Activated CD4-positive, alpha-beta T cell treated with anti-CD3 and anti-CD28 coated beads for 36 hours (primary cell): ENCODE measurements at regions of chr15 and their contacts with region 1.

Region 1: DNA sequence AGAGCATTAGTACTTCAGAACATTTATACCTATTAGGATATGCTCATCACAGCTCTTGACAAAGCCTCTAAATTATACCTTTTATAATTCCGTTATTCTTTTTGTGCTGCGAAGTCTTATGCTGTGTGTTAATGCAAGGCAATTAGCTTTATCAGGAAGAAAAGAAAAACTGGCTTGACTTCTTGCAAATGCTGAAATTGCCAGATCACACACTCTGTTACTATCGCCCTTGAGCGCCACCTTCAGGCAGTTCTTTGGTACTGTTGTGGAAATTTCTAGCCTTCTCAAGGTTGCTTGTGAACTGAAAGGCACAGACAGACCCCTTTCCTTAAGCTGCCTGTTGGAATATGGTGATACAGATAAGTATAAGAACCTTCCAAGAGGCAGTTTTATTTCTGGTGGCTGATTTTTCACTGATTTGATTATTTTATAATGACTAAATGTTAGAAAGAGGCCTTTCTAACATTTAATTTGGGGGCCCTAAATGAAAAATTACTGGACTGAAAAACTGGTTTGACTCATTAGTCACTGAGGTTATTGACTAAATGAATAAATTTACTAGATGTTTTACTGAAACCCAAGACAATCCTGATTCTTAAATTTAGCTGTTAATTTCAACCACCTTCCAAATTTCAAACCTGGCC is 126.2 kb upstream of the RASGRP1 start:
- DNase-seq: peak; percentile 89
- ATAC-seq: peak; percentile 16
- H3K4me3 Mint-ChIP-seq: no peak overlapping the region
- H3K27ac Mint-ChIP-seq: peak overlapping the region; percentile 42
- H3K4me1 Mint-ChIP-seq: peaks cover 78% of the 10 kb centered on the region
- H3K27me3 Mint-ChIP-seq: no peaks in the 10 kb centered on the region

Region 2: GRCh38 chr15:38378161-38378560 is 312.6 kb before region 1 on chr15:
- CTCF ChIA-PET with region 1: no interaction called
- POLR2A ChIA-PET with region 1: no interaction called
- intact Hi-C with region 1: no loop called
- DNase-seq: no peak
- ATAC-seq: no peak
- H3K4me3 Mint-ChIP-seq: no peak overlapping the region
- H3K27ac Mint-ChIP-seq: no peak overlapping the region
- H3K4me1 Mint-ChIP-seq: no peaks in the 10 kb centered on the region
- H3K27me3 Mint-ChIP-seq: peaks cover 37% of the 10 kb centered on the region

Region 3: GRCh38 chr15:38453971-38454695 is 236.7 kb before region 1 on chr15 and contains the start of gene FAM98B:
- CTCF ChIA-PET with region 1: interaction called, 45 read pairs
- POLR2A ChIA-PET with region 1: interaction called, 4 read pairs
- intact Hi-C with region 1: no loop called
- DNase-seq: peak; percentile 92
- ATAC-seq: peak; percentile 92
- H3K4me3 Mint-ChIP-seq: peak within 1 kb of the TSS; percentile 78
- H3K27ac Mint-ChIP-seq: peak within 1 kb of the TSS; percentile 93
- H3K4me1 Mint-ChIP-seq: peaks cover 31% of the 10 kb centered on the region
- H3K27me3 Mint-ChIP-seq: no peaks in the 10 kb centered on the region
- total RNA-seq, gene FAM98B: 54.2 to 81.9 TPM

Region 4: DNA sequence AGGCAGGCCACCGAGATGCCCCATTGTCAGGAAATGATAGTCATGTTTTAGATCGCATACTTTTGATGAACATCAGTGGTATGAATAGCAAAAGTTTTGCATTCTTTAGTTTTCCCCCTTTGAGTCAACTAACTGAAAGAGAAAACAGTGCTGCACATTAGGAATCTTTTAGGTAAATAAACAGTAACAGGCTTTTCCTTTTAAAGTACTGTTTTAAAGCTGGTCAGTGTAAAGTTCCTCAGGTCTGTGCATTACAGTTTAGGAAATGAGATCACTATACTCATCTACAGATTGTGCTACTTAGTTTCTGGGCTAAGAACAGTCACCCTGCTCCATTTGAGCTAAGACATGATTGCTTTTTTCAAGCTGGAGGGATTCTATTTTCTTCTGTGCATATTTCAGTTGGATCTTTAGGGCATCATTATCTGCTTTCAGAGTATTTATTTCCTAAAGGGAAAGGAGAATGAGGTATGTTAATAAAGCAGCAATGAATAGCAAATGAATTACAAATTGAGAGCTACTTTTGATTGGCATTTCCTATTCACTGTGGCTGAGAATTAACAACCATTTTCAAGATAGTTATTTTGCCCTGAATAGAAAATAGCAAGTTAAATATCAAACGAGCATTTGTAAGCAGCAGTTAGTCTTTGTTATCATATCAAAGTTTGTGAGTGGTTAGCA is 200.4 kb before region 1 on chr15:
- CTCF ChIA-PET with region 1: interaction called, 27 read pairs
- POLR2A ChIA-PET with region 1: interaction called, 4 read pairs
- intact Hi-C with region 1: loop called (anchors 1 to 2 kb)
- DNase-seq: no peak
- ATAC-seq: no peak
- H3K4me3 Mint-ChIP-seq: no peak overlapping the region
- H3K27ac Mint-ChIP-seq: peak overlapping the region; percentile 71
- H3K4me1 Mint-ChIP-seq: peaks cover 54% of the 10 kb centered on the region
- H3K27me3 Mint-ChIP-seq: no peaks in the 10 kb centered on the region

Region 5: GRCh38 chr15:38514601-38515000 is 176.2 kb before region 1 on chr15:
- CTCF ChIA-PET with region 1: interaction called, 15 read pairs
- POLR2A ChIA-PET with region 1: interaction called, 3 read pairs
- intact Hi-C with region 1: no loop called
- DNase-seq: no peak
- ATAC-seq: no peak
- H3K4me3 Mint-ChIP-seq: no peak overlapping the region
- H3K27ac Mint-ChIP-seq: peak overlapping the region; percentile 42
- H3K4me1 Mint-ChIP-seq: peaks cover 38% of the 10 kb centered on the region
- H3K27me3 Mint-ChIP-seq: no peaks in the 10 kb centered on the region

Region 6: GRCh38 chr15:38554354-38554753 is 136.5 kb before region 1 on chr15:
- CTCF ChIA-PET with region 1: interaction called, 339 read pairs
- POLR2A ChIA-PET with region 1: interaction called, 3 read pairs
- intact Hi-C with region 1: no loop called
- DNase-seq: peak; percentile 73
- ATAC-seq: peak; percentile 74
- H3K4me3 Mint-ChIP-seq: no peak overlapping the region
- H3K27ac Mint-ChIP-seq: peak overlapping the region; percentile 91
- H3K4me1 Mint-ChIP-seq: peaks cover 89% of the 10 kb centered on the region
- H3K27me3 Mint-ChIP-seq: no peaks in the 10 kb centered on the region

Region 7: DNA sequence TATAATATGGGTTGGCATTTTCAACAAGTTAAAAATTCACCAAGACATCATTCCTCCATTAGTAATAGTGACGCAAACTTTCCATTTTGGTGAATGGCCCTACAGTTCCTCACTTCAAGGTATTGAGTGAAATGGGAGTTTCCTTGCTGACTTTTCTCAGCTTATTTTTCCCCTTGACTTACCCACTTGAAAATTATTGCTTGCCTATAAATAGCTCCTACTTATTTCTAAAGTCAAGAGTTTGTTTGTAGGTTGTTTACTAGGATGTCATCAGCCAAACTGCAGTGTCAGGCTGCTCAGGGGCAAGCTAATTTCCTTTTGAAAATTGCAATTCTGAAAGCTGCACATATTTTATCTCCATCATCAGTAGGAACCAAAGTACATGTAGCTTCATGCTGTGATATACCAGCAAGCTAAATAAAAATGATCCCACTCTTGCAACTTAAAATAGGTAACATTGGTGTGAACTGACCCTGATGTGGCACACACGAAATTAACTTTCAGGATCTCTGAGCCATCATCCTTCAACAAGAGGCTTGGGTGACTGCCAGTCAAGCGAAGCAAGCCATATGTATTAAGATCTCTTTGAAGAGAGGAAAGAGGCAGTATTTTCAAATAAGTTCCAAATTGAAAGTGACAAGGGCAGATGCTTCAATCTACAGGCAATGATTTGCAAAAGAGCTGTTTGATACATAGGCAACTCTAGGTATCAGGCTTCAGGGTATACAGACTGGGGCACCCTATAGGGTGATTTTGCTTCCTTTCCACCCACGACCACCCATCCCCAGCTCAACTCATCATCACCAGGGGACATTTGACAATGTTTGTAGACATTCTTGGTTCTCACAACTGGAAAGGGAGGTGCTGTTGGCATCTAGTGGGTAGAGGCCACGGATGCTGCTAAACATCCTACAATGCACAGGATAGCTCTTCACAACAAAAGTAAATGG is 59.4 kb before region 1 on chr15:
- CTCF ChIA-PET with region 1: interaction called, 14 read pairs
- POLR2A ChIA-PET with region 1: no interaction called
- intact Hi-C with region 1: no loop called
- DNase-seq: no peak
- ATAC-seq: peak; percentile 69
- H3K4me3 Mint-ChIP-seq: no peak overlapping the region
- H3K27ac Mint-ChIP-seq: peak overlapping the region; percentile 88
- H3K4me1 Mint-ChIP-seq: peaks cover 54% of the 10 kb centered on the region
- H3K27me3 Mint-ChIP-seq: no peaks in the 10 kb centered on the region